Activated CD4-positive, alpha-beta T cell treated with anti-CD3 and anti-CD28 coated beads for 36 hours (primary cell): ENCODE measurements at regions of chr2 and their contacts with region 1.

Region 1: DNA sequence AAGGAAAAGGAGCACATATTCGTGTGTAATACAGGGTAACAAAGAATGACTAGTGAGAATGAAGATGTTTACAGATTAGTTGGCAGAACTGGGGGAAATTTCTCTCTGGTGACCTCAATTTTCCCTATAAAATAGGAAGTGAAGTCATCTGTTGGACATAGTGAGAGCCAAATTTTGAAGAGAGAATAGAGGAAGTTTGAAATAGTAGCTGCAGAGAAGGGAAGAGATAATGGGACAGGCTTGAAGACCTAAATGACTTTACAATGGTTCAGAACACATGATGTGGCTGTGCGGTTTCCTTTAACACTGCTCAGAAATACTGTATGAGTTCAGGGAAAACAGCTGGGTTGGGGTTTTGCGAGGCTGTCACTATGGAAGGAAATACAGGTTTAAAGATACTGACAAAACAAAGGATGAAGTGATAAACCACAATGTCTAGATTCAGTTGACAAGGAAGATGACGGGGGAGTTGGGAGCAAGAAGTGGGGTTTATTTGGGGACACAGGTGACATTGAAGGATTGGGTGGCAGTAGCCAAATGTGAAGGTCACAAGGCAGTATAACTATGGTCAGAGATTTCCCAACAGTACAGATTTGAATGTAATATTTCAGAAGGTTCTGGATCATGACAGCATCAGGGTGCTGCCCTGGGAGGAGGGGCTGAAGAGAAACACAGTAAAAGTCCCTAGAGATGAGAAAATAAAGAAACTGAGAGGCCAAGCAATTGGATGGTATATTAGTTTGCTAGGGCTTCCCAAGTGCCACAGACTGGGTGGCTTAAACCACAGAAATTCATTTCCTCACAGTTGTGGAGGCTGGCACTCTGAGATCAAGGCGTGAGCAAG is 82.6 kb upstream of the TANK start:
- DNase-seq: peak; percentile 85
- ATAC-seq: peak; percentile 84
- H3K4me3 Mint-ChIP-seq: peak overlapping the region; percentile 42
- H3K27ac Mint-ChIP-seq: peak overlapping the region; percentile 88
- H3K4me1 Mint-ChIP-seq: peaks cover 44% of the 10 kb centered on the region
- H3K27me3 Mint-ChIP-seq: no peaks in the 10 kb centered on the region

Region 2: GRCh38 chr2:159712143-159712928 is 1365.3 kb before region 1 on chr2 and contains the start of gene MARCHF7:
- CTCF ChIA-PET with region 1: no interaction called
- POLR2A ChIA-PET with region 1: no interaction called
- intact Hi-C with region 1: loop called in 1 of 2 experiments (anchors 10 kb)
- DNase-seq: peak; percentile 98
- ATAC-seq: peak; percentile 96
- H3K4me3 Mint-ChIP-seq: peak within 1 kb of the TSS; percentile 98
- H3K27ac Mint-ChIP-seq: peak within 1 kb of the TSS; percentile 100
- H3K4me1 Mint-ChIP-seq: peaks cover 42% of the 10 kb centered on the region
- H3K27me3 Mint-ChIP-seq: no peaks in the 10 kb centered on the region
- total RNA-seq, gene MARCHF7: 78.3 to 83.1 TPM

Region 3: GRCh38 chr2:160269803-160270570 is 807.6 kb before region 1 on chr2:
- CTCF ChIA-PET with region 1: interaction called, 3 read pairs
- POLR2A ChIA-PET with region 1: no interaction called
- intact Hi-C with region 1: loop called in 1 of 2 experiments (anchors 1 kb)
- DNase-seq: peak; percentile 80
- ATAC-seq: peak; percentile 59
- H3K4me3 Mint-ChIP-seq: peak overlapping the region; percentile 57
- H3K27ac Mint-ChIP-seq: peak overlapping the region; percentile 52
- H3K4me1 Mint-ChIP-seq: peaks cover 46% of the 10 kb centered on the region
- H3K27me3 Mint-ChIP-seq: no peaks in the 10 kb centered on the region

Region 4: DNA sequence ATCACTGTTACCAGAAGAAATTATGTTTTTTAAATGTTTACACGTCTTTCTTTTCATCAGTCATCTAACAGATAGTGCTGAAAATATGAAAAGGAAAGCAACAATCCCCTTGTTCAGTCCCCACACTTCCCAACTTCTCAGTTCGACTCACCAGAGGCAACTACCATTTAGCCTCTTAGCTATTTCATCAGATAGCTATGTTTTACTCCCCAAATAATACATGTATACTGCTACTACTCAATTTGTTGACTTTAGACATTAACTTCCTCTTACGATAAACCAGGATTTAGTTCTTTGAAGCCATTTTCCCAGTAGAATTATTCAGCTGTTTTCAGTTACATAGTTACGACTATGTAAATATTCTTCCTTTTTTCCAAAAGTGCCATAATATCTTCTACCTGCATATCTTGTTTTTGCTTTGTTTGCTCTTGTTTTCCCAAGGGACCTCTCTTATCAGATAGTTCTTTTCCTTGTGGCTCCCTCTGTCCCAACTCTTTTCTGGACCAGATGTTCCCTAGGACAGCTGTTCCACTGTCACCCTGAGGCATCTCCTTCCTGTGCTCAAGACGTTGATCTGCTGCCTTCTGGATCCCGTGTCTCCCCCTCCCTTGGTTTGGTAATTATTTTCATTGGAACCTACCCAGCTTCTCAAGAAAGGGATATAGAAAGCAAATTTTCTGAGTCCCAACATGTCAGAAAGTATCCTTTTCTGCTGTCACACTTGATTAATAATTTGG is 206.7 kb before region 1 on chr2:
- CTCF ChIA-PET with region 1: no interaction called
- POLR2A ChIA-PET with region 1: no interaction called
- intact Hi-C with region 1: no loop called
- DNase-seq: no peak
- ATAC-seq: no peak
- H3K4me3 Mint-ChIP-seq: no peak overlapping the region
- H3K27ac Mint-ChIP-seq: no peak overlapping the region
- H3K4me1 Mint-ChIP-seq: no peaks in the 10 kb centered on the region
- H3K27me3 Mint-ChIP-seq: no peaks in the 10 kb centered on the region

Region 5: DNA sequence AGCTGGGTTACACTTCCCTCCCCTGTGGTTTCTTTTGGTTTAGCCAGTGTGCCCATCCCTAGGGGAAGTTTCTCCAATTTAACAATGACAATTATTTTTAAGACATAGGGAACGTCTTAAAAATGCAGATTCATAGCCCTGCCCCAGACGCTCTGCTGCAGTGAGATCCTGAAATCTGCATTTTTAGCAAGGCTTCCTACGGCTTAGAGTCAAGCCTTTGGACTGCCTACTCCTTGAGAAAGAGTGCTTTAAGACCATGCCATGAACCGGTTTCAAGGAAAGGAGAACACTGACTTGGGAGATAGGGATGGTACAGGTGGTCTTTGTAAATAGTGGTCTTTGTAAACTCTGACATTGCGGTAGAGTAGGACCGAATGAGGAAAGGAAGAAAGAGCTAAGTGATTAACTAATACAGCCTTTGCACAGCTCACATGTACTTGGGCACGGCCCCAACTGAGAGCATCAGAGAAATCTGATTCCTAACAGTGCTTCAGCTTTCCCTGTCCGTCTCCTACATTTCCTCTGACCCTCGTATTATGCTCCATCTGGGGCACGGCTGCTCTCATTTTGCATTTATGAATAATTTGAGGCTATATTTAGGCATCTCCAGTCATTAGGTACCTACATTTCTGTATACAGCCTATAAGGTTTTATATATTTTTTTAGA is 135.0 kb before region 1 on chr2:
- CTCF ChIA-PET with region 1: no interaction called
- POLR2A ChIA-PET with region 1: no interaction called
- intact Hi-C with region 1: no loop called
- DNase-seq: no peak
- ATAC-seq: no peak
- H3K4me3 Mint-ChIP-seq: no peak overlapping the region
- H3K27ac Mint-ChIP-seq: no peak overlapping the region
- H3K4me1 Mint-ChIP-seq: peaks cover 23% of the 10 kb centered on the region
- H3K27me3 Mint-ChIP-seq: no peaks in the 10 kb centered on the region

Region 6: DNA sequence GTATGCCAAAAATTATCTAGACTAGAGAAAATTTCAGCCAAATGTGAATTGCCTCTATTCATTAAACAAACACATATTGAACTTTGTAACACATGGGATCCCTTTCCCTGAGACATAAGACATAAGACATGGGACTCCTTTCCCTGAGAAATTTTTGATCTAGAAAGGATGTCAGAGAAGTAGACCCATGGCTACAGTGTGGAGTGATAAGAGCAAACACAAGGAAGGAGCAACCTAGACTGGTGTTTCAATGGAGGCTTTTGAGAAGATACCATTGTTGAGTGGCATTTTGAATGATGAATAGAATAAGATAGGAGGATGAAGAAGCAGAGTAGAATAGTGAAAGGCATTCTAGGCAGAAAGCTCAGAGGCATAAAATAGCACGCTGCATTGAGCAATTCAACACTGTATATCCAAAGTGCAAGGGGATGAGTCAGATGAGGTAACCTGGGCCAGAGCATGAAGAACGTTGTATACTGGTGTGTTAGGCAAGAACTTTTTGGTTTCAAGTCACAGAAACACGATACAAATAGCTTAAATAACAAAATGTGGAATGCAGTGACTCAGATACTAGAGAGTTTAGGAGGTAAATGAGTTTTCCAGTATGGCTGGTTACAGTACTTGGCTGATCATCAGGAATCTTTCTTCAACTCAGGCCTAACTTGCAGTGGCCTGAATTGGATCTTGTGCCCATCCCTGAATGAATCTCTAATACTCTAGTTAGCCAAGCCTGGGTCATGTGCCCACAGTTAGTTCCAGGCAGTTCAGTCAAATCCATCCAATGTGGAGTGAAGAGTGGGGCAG is 47.1 kb before region 1 on chr2:
- CTCF ChIA-PET with region 1: no interaction called
- POLR2A ChIA-PET with region 1: no interaction called
- intact Hi-C with region 1: no loop called
- DNase-seq: no peak
- ATAC-seq: no peak
- H3K4me3 Mint-ChIP-seq: no peak overlapping the region
- H3K27ac Mint-ChIP-seq: no peak overlapping the region
- H3K4me1 Mint-ChIP-seq: peaks cover 4% of the 10 kb centered on the region
- H3K27me3 Mint-ChIP-seq: peaks cover 1% of the 10 kb centered on the region

Region 7: GRCh38 chr2:161063157-161063954 is 14.2 kb before region 1 on chr2:
- CTCF ChIA-PET with region 1: interaction called, 75 read pairs
- POLR2A ChIA-PET with region 1: no interaction called
- intact Hi-C with region 1: no loop called
- DNase-seq: peak; percentile 78
- ATAC-seq: peak; percentile 90
- H3K4me3 Mint-ChIP-seq: no peak overlapping the region
- H3K27ac Mint-ChIP-seq: no peak overlapping the region
- H3K4me1 Mint-ChIP-seq: peaks cover 7% of the 10 kb centered on the region
- H3K27me3 Mint-ChIP-seq: no peaks in the 10 kb centered on the region

Region 8: GRCh38 chr2:161136696-161137324 is 59.2 kb after region 1 on chr2:
- CTCF ChIA-PET with region 1: interaction called, 3 read pairs
- POLR2A ChIA-PET with region 1: no interaction called
- intact Hi-C with region 1: loop called (anchors 1 kb)
- DNase-seq: peak; percentile 30
- ATAC-seq: peak; percentile 82
- H3K4me3 Mint-ChIP-seq: peak overlapping the region; percentile 83
- H3K27ac Mint-ChIP-seq: peak overlapping the region; percentile 98
- H3K4me1 Mint-ChIP-seq: peaks cover 52% of the 10 kb centered on the region
- H3K27me3 Mint-ChIP-seq: no peaks in the 10 kb centered on the region

Region 9: DNA sequence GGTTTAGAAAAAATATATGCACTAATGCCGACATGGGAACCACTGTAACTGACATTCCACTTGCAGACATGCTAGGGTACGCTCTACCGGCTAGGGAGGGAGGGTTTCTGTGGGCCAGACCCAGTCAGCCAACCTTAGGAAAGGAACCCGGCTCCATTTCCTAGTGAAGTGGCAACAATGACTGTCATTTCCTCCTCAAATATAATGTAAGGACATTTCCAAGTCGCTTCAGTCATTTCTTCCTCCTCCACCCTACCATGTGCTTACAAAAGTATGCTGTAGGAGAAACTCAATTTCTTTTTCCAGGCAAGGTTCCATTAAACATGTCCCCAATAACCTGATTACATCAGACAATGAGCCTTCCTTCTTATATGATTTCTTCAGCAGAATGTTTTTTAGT is 166.3 kb after region 1 on chr2:
- CTCF ChIA-PET with region 1: no interaction called
- POLR2A ChIA-PET with region 1: no interaction called
- intact Hi-C with region 1: loop called (anchors 1 to 5 kb)
- DNase-seq: peak; percentile 53
- ATAC-seq: peak; percentile 20
- H3K4me3 Mint-ChIP-seq: peak overlapping the region; percentile 91
- H3K27ac Mint-ChIP-seq: peak overlapping the region; percentile 98
- H3K4me1 Mint-ChIP-seq: peaks cover 56% of the 10 kb centered on the region
- H3K27me3 Mint-ChIP-seq: no peaks in the 10 kb centered on the region